HEK293 (cell line): ENCODE measurements at regions of chr11 and their contacts with region 1.

Region 1: GRCh38 chr11:19703211-19703610 is 9.4 kb upstream of the NAV2 start:
- H3K4me3 ChIP-seq: no peak overlapping the region
- H3K27ac ChIP-seq: no peak overlapping the region
- H3K4me1 ChIP-seq: no peaks in the 10 kb centered on the region
- CTCF ChIP-seq: no peak

Region 2: GRCh38 chr11:19524161-19524671 is 179.0 kb before region 1 on chr11:
- CTCF ChIA-PET with region 1: no interaction called
- POLR2A ChIA-PET with region 1: interaction called, 12 read pairs
- H3K4me3 ChIP-seq: no peak overlapping the region
- H3K27ac ChIP-seq: no peak overlapping the region
- H3K4me1 ChIP-seq: peaks cover 9% of the 10 kb centered on the region
- CTCF ChIP-seq: no peak